HepG2 (cell line): ENCODE measurements at regions of chr17 and their contacts with region 1.

Region 1: GRCh38 chr17:83174285-83175118 is 95.1 kb downstream of the METRNL start:
- DNase-seq: peak; percentile 90
- ATAC-seq: peak; percentile 93
- H3K4me3 ChIP-seq: no peak overlapping the region
- H3K27ac ChIP-seq: no peak overlapping the region
- H3K4me1 ChIP-seq: peaks cover 25% of the 10 kb centered on the region
- H3K27me3 ChIP-seq: peaks cover 19 to 70% of the 10 kb centered on the region in 2 experiments
- CTCF ChIP-seq: peak; percentile 49
- EP300 ChIP-seq: peak; percentile 78 to 86; a peak in 3 of 4 replicates
- POLR2A ChIP-seq: no peak
- RAD21 ChIP-seq: peak; percentile 44

Region 2: DNA sequence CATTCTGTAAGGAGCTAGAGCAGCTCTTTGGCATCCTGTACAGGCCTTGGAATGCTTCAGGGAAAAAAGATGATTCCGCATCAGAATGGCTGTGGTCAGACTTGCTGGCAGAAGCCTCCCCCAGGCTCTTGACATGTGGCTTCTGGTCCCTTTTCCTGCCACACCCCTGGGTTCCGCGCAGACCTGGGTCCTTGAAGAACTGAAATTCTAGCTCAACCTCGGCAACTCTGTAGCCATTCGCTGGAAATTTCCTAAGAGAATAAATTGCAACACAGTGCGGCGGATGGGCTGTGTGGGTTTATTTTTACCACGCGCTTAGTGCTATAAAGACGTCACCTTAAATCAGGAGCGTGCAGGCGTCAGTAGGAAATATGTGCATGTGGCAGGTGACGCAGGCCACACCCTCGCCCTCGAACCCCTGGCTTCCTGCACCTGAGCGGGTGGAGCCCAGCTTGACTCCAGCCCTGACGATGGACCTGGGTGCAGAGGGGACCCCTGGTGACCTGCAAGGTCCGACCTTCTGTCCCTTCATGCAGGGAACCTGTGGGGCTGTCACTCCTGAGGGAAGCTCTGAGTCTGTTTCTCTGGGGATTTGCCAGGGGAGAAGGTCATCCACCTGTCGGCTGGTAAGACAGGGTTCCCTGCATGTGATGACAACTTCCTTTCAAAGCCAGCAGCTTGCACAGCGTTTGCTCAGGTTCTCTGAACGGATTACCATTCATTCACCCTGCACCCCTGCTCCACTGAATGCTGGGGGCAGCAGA is 48.8 kb before region 1 on chr17:
- CTCF ChIA-PET with region 1: no interaction called
- POLR2A ChIA-PET with region 1: no interaction called
- in situ Hi-C with region 1: no loop called
- intact Hi-C with region 1: loop called (anchors 1 kb)
- DNase-seq: no peak
- ATAC-seq: peak; percentile 55
- H3K4me3 ChIP-seq: no peak overlapping the region
- H3K27ac ChIP-seq: no peak overlapping the region
- H3K4me1 ChIP-seq: peaks cover 22% of the 10 kb centered on the region
- H3K27me3 ChIP-seq: peaks cover 8 to 71% of the 10 kb centered on the region in 2 experiments; a peak in 4 of 5 replicates
- CTCF ChIP-seq: no peak
- EP300 ChIP-seq: no peak
- POLR2A ChIP-seq: no peak
- RAD21 ChIP-seq: no peak

Region 3: GRCh38 chr17:83151442-83152226 is 22.9 kb before region 1 on chr17:
- CTCF ChIA-PET with region 1: no interaction called
- POLR2A ChIA-PET with region 1: interaction called, 6 read pairs
- in situ Hi-C with region 1: no loop called
- intact Hi-C with region 1: loop called (anchors 1 kb)
- DNase-seq: peak; percentile 94
- ATAC-seq: peak; percentile 90
- H3K4me3 ChIP-seq: peak overlapping the region; percentile 12 to 61 (median 35); a peak in 5 of 6 replicates
- H3K27ac ChIP-seq: peak overlapping the region; percentile 57
- H3K4me1 ChIP-seq: peaks cover 33% of the 10 kb centered on the region
- H3K27me3 ChIP-seq: peaks cover 1 to 27% of the 10 kb centered on the region in 2 experiments
- CTCF ChIP-seq: no peak
- EP300 ChIP-seq: peak in 1 of 2 experiments; percentile 81; a peak in 2 of 4 replicates
- POLR2A ChIP-seq: peak in 1 of 2 experiments; percentile 75; a peak in 2 of 4 replicates
- RAD21 ChIP-seq: peak; percentile 22; the same call in 1 of the 2 replicates